Activated CD8-positive, alpha-beta memory T cell treated with anti-CD3 and anti-CD28 coated beads, Interleukin-2, amount 10 ng/mL, durations not matched to agents 7 days and 5 days (primary cell): ENCODE measurements at regions of chr2 and their contacts with region 1.

Region 1: GRCh38 chr2:189751080-189751658 is 11.4 kb downstream of the OSGEPL1 start:
- DNase-seq: peak; percentile 52
- ATAC-seq: peak; percentile 75
- H3K4me3 Mint-ChIP-seq: no peak overlapping the region
- H3K27ac Mint-ChIP-seq: no peak overlapping the region
- H3K4me1 Mint-ChIP-seq: no peaks in the 10 kb centered on the region
- H3K27me3 Mint-ChIP-seq: no peaks in the 10 kb centered on the region

Region 2: DNA sequence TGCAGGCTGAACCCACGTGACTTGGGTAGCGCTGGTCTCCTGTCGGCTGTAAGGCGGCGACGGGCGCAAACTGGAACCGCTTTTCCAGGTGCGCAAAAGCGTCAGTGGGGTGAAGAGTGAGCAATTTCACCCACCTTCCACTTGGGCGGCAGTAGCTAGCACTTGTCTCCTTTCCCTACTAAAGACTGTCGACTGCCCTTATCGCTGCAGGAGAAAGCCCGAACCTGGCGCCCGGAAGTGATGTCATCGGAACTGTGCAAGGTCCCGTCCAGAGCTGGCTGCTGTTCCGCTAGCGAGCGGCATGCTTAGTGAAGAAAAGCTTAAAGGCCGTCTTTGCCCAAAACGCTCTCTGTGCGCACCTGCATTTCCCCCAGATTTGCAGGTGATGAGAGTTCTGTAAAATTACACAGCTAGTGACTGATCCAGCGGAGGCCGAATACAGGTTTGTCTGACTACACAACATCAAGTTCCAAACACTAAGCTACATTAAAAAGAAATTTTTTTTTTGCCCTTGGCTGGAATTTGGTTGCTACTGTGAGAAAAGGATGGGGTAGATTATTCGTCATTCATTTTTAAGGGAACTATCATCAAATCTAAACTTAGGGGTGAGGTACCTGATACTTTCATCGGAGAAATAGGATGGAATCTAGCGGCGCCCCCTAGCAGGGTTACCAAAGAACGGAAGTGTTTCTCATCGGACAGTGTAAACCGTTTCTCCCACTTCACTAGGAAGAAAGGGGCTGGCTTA is 11.6 kb after region 1 on chr2 and contains the start of gene OSGEPL1:
- CTCF ChIA-PET with region 1: interaction called, 31 read pairs
- DNase-seq: peak; percentile 96
- ATAC-seq: peak; percentile 96
- H3K4me3 Mint-ChIP-seq: peak within 1 kb of the TSS; percentile 92
- H3K27ac Mint-ChIP-seq: peak within 1 kb of the TSS; percentile 98
- H3K4me1 Mint-ChIP-seq: peaks cover 14% of the 10 kb centered on the region
- H3K27me3 Mint-ChIP-seq: no peaks in the 10 kb centered on the region
- total RNA-seq, gene OSGEPL1: 10.0 to 11.3 TPM